ENCODE measurements at regions of chr7 and their contacts with region 1.

Region 1: DNA sequence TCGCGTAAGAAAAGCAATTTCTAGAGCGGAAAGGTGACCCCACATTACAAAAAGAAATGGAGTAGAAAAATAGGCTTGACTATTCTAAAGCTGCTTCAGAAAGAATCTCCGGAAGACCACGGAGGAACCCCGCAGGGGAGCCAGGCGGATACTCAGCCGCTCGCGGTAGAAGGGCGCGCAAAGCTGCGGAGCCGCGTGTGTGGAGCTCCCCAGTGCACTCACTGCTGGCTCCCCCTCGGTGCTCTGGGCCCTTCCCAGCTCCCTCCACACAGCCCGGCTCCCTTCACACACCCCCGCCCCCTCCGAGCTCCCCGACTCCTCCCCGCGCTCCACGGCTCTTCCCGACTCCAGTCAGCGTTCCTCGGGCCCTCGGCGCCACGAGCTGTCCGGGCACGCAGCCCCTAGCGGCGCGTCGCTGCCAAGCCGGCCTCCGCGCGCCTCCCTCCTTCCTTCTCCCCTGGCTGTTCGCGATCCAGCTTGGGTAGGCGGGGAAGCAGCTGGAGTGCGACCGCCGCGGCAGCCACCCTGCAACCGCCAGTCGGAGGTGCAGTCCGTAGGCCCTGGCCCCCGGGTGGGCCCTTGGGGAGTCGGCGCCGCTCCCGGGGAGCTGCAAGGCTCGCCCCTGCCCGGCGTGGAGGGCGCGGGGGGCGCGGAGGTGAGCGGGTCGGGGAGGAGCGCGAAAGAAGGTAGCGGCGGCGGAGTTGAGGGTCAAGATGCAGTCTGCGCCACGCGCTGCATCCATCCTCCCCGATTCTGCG is at the start of gene STEAP2:
- DNase-seq: no peak
- ATAC-seq: peak; percentile 91
- H3K4me3 ChIP-seq: no peak within 1 kb of the TSS
- H3K27ac ChIP-seq: no peak within 1 kb of the TSS
- H3K4me1 ChIP-seq: no peaks in the 10 kb centered on the region
- H3K27me3 ChIP-seq: peaks cover 1 to 17% of the 10 kb centered on the region in 2 experiments
- CTCF ChIP-seq: peak; percentile 32 to 61 (median 44)
- EP300 ChIP-seq: no peak
- POLR2A ChIP-seq: no peak
- RAD21 ChIP-seq: no peak
- polyA plus RNA-seq, gene STEAP2: 0.64 to 0.80 TPM

Region 2: DNA sequence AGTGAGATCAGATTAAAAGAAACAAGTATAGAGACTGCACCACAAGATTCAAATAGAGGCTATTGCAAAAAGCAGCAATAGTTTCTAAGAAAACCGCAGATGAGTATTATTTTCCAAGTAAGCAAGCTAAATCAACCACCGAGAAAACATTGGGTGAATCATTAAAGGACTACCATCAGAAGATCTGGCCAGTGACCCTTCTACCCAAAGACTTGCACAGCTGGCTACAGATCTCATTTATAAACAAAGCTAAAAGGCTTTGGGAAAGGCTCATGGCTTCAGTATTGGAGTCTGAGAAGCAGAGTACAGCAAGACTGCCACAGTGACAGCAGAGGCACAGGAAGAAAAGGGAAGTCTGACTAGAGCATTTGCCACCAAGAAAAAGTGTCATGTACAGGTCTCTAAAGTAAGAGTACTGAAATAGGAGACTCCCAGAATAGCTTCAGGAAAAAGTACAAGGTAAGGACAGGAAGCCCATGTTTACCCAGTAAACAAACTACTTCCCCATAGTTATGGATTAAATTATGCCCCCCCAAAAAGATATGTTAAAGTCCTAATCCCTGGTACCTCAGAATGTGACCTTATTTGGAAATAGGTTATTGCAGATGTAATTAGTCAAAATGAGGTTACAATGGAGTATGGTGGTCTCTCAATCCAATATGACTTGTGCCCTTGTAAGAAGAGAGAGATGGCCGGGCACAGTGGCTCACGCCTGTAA is 38.3 kb before region 1 on chr7:
- CTCF ChIA-PET with region 1: interaction called, 7 read pairs
- POLR2A ChIA-PET with region 1: interaction called, 8 read pairs
- RAD21 ChIA-PET with region 1: interaction called, 24 read pairs
- SMC1A ChIA-PET with region 1: interaction called, 26 read pairs
- in situ Hi-C with region 1: no loop called
- intact Hi-C with region 1: no loop called
- DNase-seq: peak; percentile 64
- ATAC-seq: peak; percentile 93
- H3K4me3 ChIP-seq: no peak overlapping the region
- H3K27ac ChIP-seq: no peak overlapping the region
- H3K4me1 ChIP-seq: no peaks in the 10 kb centered on the region
- H3K27me3 ChIP-seq: no peaks in the 10 kb centered on the region
- CTCF ChIP-seq: no peak
- EP300 ChIP-seq: peak in 1 of 2 experiments; percentile 48; a peak in 1 of 4 replicates
- POLR2A ChIP-seq: no peak
- RAD21 ChIP-seq: no peak

Region 3: GRCh38 chr7:90188281-90188680 is 23.3 kb before region 1 on chr7:
- CTCF ChIA-PET with region 1: interaction called, 8 read pairs
- POLR2A ChIA-PET with region 1: interaction called, 13 read pairs
- RAD21 ChIA-PET with region 1: interaction called, 19 read pairs
- SMC1A ChIA-PET with region 1: interaction called, 29 read pairs
- in situ Hi-C with region 1: no loop called
- intact Hi-C with region 1: no loop called
- DNase-seq: no peak
- ATAC-seq: peak; percentile 95
- H3K4me3 ChIP-seq: no peak overlapping the region
- H3K27ac ChIP-seq: no peak overlapping the region
- H3K4me1 ChIP-seq: no peaks in the 10 kb centered on the region
- H3K27me3 ChIP-seq: no peaks in the 10 kb centered on the region
- CTCF ChIP-seq: no peak
- EP300 ChIP-seq: no peak
- POLR2A ChIP-seq: no peak
- RAD21 ChIP-seq: no peak

Region 4: GRCh38 chr7:90222811-90223725 is 11.5 kb after region 1 on chr7:
- CTCF ChIA-PET with region 1: interaction called, 67 read pairs
- POLR2A ChIA-PET with region 1: interaction called, 40 read pairs
- RAD21 ChIA-PET with region 1: interaction called, 63 read pairs
- SMC1A ChIA-PET with region 1: interaction called, 116 read pairs
- in situ Hi-C with region 1: no loop called
- intact Hi-C with region 1: no loop called
- DNase-seq: no peak
- ATAC-seq: peak; percentile 75
- H3K4me3 ChIP-seq: no peak overlapping the region
- H3K27ac ChIP-seq: no peak overlapping the region
- H3K4me1 ChIP-seq: no peaks in the 10 kb centered on the region
- H3K27me3 ChIP-seq: no peaks in the 10 kb centered on the region
- CTCF ChIP-seq: no peak
- EP300 ChIP-seq: no peak
- POLR2A ChIP-seq: no peak
- RAD21 ChIP-seq: no peak

Region 5: DNA sequence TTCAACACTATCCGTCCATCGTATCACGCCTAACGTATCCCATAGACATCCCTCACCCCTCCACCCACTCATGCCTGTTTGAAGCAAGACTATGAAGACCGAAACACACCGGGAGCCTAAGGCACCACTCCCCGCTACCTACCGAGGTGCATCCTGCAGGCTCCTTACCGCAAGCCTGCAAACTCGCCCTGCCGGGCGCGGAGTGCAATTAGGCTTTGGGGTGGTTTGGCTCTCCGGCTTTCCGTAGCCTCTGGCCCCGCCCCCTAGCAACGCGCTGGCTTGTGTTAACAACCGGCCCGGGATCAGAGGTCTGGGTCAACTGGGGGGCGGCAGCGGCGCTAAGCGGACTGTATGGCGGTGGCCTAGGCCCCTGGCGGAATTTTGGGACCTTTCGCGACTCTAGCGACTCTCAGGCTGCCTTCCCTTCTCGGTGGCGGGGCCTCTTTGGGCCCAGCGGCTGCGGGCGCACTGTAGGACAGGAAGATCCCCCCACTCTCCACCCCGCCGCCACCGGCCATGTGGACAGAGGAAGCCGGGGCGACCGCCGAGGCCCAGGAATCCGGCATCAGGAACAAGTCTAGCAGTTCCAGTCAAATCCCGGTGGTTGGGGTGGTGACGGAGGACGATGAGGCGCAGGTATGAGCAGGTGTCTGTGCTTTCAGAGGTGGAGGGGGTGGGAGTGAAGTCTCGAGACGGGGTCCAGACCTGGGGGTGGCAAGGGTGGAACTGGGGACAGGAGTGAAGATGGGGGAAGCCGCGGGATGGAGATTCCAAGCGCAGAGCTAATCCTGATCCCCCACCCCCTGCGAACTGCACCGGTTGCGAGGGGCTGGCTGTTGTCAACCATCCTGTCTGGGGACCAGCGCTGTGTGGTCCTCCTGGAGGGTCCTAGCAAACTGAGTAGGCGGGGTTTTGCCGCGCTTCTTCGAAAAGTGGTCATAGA is 33.6 kb after region 1 on chr7 and contains the start of gene CFAP69:
- CTCF ChIA-PET with region 1: interaction called, 31 read pairs
- POLR2A ChIA-PET with region 1: interaction called, 92 read pairs
- RAD21 ChIA-PET with region 1: interaction called, 90 read pairs
- SMC1A ChIA-PET with region 1: interaction called, 59 read pairs
- in situ Hi-C with region 1: no loop called
- intact Hi-C with region 1: loop called (anchors 1 kb)
- DNase-seq: peak; percentile 46
- ATAC-seq: peak; percentile 69
- H3K4me3 ChIP-seq: peak within 1 kb of the TSS; percentile 66
- H3K27ac ChIP-seq: no peak within 1 kb of the TSS
- H3K4me1 ChIP-seq: peaks cover 5% of the 10 kb centered on the region; the same call in 1 of the 2 replicates
- H3K27me3 ChIP-seq: peaks cover 0 to 6% of the 10 kb centered on the region in 2 experiments; a peak in 1 of 4 replicates
- CTCF ChIP-seq: peak in 2 of 3 experiments; percentile 7 to 30; a peak in 1 of 6 replicates
- EP300 ChIP-seq: peak in 1 of 2 experiments; percentile 62; a peak in 2 of 4 replicates
- POLR2A ChIP-seq: peak; percentile 31; the same call in 1 of the 2 replicates
- RAD21 ChIP-seq: no peak
- polyA plus RNA-seq, gene CFAP69: 0.11 TPM in 1 of 2 experiments, not detected in the other

Region 6: DNA sequence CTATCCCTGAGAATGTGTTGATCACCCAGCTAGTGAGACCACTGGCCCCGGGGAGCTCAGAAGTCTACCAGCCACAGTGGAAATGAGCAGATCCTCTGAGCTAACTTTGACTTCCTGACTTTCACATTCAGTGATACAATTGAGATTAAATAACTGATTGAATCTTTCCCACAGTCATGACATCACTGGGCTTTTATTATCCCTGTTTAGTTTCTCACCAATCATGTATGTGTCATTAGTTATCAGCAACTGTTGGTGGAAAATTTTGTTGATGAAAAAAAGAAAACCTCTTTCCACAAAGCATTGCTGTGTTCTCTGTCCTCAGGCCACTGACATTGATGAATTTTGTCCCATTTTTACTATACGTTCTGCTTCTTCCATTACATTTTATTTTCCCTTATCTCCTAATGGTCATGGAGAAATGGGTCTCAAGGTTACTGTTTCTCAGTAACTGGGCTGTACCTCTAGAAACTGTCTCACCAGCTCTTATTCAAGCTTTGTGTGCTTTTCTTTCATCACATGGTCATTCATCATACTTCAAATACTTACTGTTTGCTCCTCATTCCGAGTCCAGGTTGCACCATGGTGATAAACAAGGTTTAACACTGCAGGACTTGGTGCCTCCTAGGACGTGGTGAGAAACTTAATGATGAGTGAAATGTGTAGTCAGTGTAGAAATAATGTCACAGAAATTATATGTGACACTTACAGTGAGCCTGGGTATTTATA is 689.2 kb after region 1 on chr7:
- CTCF ChIA-PET with region 1: no interaction called
- POLR2A ChIA-PET with region 1: no interaction called
- RAD21 ChIA-PET with region 1: no interaction called
- SMC1A ChIA-PET with region 1: no interaction called
- in situ Hi-C with region 1: no loop called
- intact Hi-C with region 1: no loop called
- DNase-seq: no peak
- ATAC-seq: no peak
- H3K4me3 ChIP-seq: no peak overlapping the region
- H3K27ac ChIP-seq: no peak overlapping the region
- H3K4me1 ChIP-seq: no peaks in the 10 kb centered on the region
- H3K27me3 ChIP-seq: no peaks in the 10 kb centered on the region
- CTCF ChIP-seq: no peak
- EP300 ChIP-seq: no peak
- POLR2A ChIP-seq: no peak
- RAD21 ChIP-seq: no peak